Common myeloid progenitor, CD34-positive (primary cell): ENCODE measurements at regions of chr6 and their contacts with region 1.

Region 1: GRCh38 chr6:39189915-39190544 is 39.2 kb downstream of the KCNK5 start:
- DNase-seq: peak in 2 of 3 donors; percentile 21 to 34
- H3K4me3 ChIP-seq: no peak overlapping the region
- H3K27ac ChIP-seq: no peak overlapping the region
- H3K4me1 ChIP-seq: peaks cover 0 to 16% (median 4%) of the 10 kb centered on the region in 4 experiments
- H3K27me3 ChIP-seq: no peaks in the 10 kb centered on the region

Region 2: GRCh38 chr6:39203852-39204375 is 13.9 kb after region 1 on chr6:
- CTCF ChIA-PET with region 1: interaction called, 48 read pairs
- POLR2A ChIA-PET with region 1: interaction called, 3 read pairs
- DNase-seq: no peak
- H3K4me3 ChIP-seq: no peak overlapping the region
- H3K27ac ChIP-seq: no peak overlapping the region
- H3K4me1 ChIP-seq: peaks cover 0 to 18% (median 9%) of the 10 kb centered on the region in 4 experiments
- H3K27me3 ChIP-seq: no peaks in the 10 kb centered on the region